ENCODE measurements at regions of chr6 and their contacts with region 1.

Region 1: DNA sequence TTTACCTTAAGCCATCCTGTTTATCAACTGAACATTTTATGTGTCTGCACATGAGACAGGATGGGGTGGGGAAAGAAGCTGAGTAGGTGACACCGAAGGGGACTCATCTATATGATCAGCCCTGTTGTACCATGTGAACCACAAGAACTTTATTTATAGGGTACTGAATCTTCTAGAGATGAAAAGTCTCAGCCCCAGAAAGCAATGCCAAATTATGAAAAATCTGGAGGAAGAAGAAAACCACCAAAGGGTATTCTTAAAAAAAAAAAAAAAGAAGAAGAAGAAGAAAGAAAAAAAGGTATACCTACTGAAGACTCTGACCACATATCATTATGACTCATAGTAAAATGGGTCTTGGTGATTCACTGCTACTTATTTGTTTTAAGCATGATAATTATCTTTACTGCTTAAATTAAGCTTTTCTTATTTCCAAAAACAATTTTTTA is 39.8 kb upstream of the HBS1L start:
- DNase-seq: no peak
- ATAC-seq: peak; percentile 81
- H3K4me3 ChIP-seq: no peak overlapping the region
- H3K27ac ChIP-seq: no peak overlapping the region
- H3K4me1 ChIP-seq: peaks cover 11% of the 10 kb centered on the region; the same call in 1 of the 2 replicates
- H3K27me3 ChIP-seq: no peaks in the 10 kb centered on the region; a peak in 1 of 4 replicates
- CTCF ChIP-seq: no peak
- EP300 ChIP-seq: no peak
- POLR2A ChIP-seq: no peak
- RAD21 ChIP-seq: no peak

Region 2: DNA sequence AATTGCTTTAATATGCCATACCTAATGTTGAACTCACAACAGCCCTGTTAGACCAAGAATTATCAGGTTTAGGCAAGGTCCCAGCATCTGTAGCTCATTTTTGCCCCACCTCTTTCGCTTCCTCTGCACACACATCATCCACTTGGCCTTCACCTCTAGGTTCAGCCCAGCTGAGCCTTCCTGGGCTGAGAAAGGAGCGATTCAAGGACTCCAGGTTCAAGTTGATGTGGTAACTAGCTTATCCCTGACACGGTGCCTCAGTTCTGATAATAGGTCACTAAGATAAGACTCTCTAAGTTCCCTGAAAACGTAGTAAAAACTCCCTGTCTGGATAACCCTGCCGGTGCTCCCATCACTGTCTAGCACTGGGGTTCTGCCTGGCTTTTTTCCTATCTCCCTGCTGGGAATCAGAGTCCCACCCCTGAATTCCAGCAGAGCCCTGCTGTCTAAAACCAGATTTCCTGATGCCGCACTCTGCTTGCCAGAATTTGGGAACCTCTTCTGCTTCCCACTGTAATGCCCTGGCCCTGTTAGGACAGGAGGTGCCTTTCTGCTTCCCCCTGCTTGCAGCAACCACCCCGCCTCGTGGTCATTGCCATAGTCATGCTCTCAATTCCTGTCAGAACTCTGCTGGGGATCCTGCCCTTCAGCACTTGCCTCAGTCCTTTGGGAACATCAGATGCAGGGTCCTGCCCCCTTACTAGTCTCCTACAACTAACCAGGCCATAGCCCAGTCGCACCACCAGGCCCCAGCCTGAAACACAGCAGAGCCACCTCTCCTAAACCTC is 192.2 kb before region 1 on chr6:
- CTCF ChIA-PET with region 1: no interaction called
- POLR2A ChIA-PET with region 1: no interaction called
- RAD21 ChIA-PET with region 1: no interaction called
- SMC1A ChIA-PET with region 1: no interaction called
- in situ Hi-C with region 1: no loop called
- intact Hi-C with region 1: no loop called
- DNase-seq: no peak
- ATAC-seq: no peak
- H3K4me3 ChIP-seq: no peak overlapping the region
- H3K27ac ChIP-seq: no peak overlapping the region
- H3K4me1 ChIP-seq: no peaks in the 10 kb centered on the region
- H3K27me3 ChIP-seq: no peaks in the 10 kb centered on the region
- CTCF ChIP-seq: no peak
- EP300 ChIP-seq: no peak
- POLR2A ChIP-seq: no peak
- RAD21 ChIP-seq: no peak

Region 3: DNA sequence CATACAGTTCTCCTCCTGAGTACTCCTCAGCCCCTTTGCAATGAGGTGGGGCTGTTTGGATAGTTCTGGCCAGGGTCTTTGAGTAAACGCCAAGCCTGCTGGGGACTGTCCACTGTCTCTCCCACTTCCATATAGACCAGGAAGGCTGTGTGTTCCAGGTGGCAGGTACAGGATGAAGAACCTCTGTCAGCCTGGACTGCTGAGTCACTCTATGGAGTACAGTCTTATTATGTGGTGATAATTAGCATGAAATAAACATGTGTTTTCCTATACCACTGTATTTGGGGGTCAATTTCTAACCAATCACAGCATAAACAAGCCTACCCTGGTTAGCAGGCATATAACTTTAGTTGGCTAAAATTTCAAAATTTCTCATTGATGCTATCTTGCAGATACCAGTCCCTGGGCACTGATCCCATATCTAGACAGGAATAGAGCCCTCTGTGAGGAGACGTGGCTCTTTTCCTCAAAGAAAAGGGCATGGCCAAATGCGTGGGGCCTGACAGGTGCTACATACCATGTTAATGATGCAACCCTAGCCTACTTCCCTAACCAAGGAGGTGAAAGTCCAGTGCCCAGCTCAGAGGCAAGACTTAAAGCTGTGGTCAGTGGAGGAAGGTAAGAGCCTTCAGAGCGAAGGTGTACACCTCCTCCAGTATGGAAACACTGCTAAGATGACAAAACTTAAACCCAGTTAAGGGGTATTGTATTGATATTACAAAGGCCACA is 140.0 kb before region 1 on chr6:
- CTCF ChIA-PET with region 1: no interaction called
- POLR2A ChIA-PET with region 1: no interaction called
- RAD21 ChIA-PET with region 1: no interaction called
- SMC1A ChIA-PET with region 1: no interaction called
- in situ Hi-C with region 1: no loop called
- intact Hi-C with region 1: no loop called
- DNase-seq: no peak
- ATAC-seq: no peak; the same call in 2 of the 3 replicates
- H3K4me3 ChIP-seq: no peak overlapping the region
- H3K27ac ChIP-seq: no peak overlapping the region
- H3K4me1 ChIP-seq: no peaks in the 10 kb centered on the region
- H3K27me3 ChIP-seq: no peaks in the 10 kb centered on the region
- CTCF ChIP-seq: no peak
- EP300 ChIP-seq: no peak
- POLR2A ChIP-seq: no peak
- RAD21 ChIP-seq: no peak

Region 4: GRCh38 chr6:135105710-135106109 is 11.3 kb after region 1 on chr6:
- CTCF ChIA-PET with region 1: interaction called, 73 read pairs
- POLR2A ChIA-PET with region 1: interaction called, 28 read pairs
- RAD21 ChIA-PET with region 1: interaction called, 5 read pairs
- SMC1A ChIA-PET with region 1: interaction called, 29 read pairs
- in situ Hi-C with region 1: no loop called
- intact Hi-C with region 1: no loop called
- DNase-seq: no peak
- ATAC-seq: no peak
- H3K4me3 ChIP-seq: no peak overlapping the region
- H3K27ac ChIP-seq: no peak overlapping the region
- H3K4me1 ChIP-seq: peaks cover 3% of the 10 kb centered on the region
- H3K27me3 ChIP-seq: no peaks in the 10 kb centered on the region
- CTCF ChIP-seq: no peak
- EP300 ChIP-seq: no peak
- POLR2A ChIP-seq: no peak
- RAD21 ChIP-seq: no peak

Region 5: DNA sequence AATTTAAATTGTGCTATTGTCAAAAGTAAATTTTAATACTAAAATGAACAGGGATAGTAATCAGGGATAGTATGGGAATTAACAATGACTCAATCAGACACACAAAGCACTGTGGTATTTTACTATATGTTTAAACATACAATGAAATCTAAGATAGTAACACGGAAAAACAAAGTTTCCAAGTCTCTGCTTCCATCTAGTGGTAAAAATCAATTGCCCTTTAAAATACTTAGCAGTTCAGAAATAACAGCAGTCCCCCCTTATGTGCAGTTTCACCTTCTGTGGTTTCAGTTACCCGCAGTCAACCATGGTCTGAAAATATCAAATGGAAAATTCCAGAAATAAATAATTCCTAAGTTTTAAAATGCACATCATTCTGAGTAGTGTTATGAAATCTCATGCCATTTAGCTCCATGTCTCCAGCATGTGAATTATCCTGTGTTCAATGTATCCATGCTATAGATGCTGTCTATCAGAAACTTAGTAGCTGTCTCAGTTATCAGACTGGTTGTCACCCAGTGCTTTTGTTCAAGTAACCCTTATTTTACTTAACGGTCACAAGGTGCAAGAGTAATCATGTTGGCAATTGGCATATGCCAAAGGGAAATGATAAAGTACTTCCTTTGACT is 344.6 kb after region 1 on chr6:
- CTCF ChIA-PET with region 1: no interaction called
- POLR2A ChIA-PET with region 1: no interaction called
- RAD21 ChIA-PET with region 1: no interaction called
- SMC1A ChIA-PET with region 1: no interaction called
- in situ Hi-C with region 1: no loop called
- intact Hi-C with region 1: no loop called
- DNase-seq: peak; percentile 17
- ATAC-seq: peak; percentile 83
- H3K4me3 ChIP-seq: no peak overlapping the region
- H3K27ac ChIP-seq: no peak overlapping the region
- H3K4me1 ChIP-seq: peaks cover 11% of the 10 kb centered on the region
- H3K27me3 ChIP-seq: no peaks in the 10 kb centered on the region
- CTCF ChIP-seq: peak; percentile 55 to 66 (median 58)
- EP300 ChIP-seq: no peak
- POLR2A ChIP-seq: no peak
- RAD21 ChIP-seq: peak; percentile 74